ENCODE measurements at regions of chr21 and their contacts with region 1.

Region 1: DNA sequence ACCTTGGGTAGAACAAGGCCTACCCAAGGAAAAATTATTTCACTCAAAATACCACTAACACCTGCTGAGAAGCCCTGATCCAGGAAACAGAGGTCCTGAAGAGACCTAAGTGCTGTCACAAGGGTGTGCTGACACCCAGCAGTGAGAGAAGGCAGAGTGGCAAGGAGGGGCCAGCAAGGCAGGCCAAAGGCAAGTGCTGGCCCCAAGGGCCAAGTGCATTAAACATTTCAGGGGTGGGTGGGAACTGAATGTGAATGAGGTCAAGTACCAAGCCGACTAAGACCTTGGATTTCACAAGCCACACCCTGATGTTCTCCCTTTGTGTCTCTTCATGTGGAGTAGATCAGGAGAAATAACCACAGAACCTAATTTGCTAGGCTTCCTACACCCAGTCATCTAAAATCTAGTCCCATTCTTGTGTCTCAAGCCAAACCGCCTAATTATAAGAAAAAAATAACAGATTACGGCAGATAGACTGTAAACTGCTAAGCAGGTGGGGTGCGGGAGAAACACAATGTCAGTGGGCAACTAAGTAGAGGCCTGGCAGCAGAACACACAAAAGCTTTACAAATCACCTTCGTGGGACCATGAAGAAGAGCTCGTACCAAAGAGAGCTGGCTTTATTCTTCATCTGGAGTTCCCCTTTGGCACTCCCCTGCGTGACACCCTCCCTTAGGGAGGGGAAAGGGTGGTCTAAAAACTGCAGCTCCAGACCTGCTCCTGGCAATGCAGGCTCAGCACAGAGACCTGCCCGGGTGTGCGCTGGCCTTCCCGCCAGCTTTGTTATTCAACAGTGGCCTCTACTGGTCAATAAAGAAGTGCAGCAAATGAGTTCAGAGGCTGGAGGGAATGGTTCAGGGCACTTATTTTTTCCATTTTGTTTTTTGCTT is 8.7 kb downstream of the UBE2G2 start:
- DNase-seq: peak; percentile 51
- H3K4me3 ChIP-seq: no peak overlapping the region
- H3K27ac ChIP-seq: no peak overlapping the region
- H3K4me1 ChIP-seq: peaks cover 6% of the 10 kb centered on the region
- H3K27me3 ChIP-seq: no peaks in the 10 kb centered on the region
- CTCF ChIP-seq: peak; percentile 71 to 82

Region 2: DNA sequence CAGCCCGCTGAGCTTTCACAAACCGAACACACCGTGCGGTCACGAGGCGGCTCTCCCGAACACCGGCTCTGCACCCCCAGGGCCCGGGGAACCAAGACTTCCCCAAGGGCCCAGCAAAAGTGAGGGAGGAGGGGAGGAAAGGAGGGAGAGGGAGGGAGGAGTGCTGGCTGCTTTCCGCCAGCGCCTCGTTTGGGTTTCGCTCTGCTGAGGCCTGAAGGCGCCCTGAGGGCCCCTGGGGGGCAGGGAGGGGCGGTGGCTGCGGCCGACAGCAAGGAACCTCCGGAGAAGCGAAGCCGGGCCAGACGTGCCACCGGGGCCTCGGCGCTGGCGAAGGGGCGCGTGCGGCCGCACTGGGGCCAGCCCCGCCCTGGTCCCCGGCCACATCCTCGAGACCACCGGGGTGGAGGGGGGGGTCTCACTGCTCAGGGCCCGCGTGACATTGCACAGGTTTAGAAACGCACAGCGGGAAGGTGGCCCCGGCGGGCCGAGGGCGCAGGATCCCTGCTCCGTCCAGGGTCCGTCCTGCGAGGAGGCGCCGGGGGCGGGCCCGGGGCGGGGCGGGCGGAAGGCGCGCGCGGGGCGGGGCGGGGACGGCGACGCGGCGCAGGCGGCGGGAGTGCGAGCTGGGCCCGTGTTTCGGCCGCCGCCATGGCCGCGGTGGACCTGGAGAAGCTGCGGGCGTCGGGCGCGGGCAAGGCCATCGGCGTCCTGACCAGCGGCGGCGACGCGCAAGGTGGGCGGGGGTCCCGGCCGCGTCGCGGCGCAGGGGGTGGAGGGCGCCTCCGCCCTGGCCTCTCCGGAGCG is 493.3 kb before region 1 on chr21 and contains the start of gene PFKL:
- CTCF ChIA-PET with region 1: no interaction called
- dilution Hi-C with region 1: no loop called
- in situ Hi-C with region 1: no loop called
- intact Hi-C with region 1: loop called (anchors 5 kb)
- DNase-seq: peak; percentile 66
- H3K4me3 ChIP-seq: peak within 1 kb of the TSS; percentile 54 to 86 (median 67)
- H3K27ac ChIP-seq: peak within 1 kb of the TSS; percentile 65
- H3K4me1 ChIP-seq: peaks cover 23% of the 10 kb centered on the region
- H3K27me3 ChIP-seq: no peaks in the 10 kb centered on the region
- CTCF ChIP-seq: no peak
- total RNA-seq, gene PFKL: 113 to 142 TPM

Region 3: DNA sequence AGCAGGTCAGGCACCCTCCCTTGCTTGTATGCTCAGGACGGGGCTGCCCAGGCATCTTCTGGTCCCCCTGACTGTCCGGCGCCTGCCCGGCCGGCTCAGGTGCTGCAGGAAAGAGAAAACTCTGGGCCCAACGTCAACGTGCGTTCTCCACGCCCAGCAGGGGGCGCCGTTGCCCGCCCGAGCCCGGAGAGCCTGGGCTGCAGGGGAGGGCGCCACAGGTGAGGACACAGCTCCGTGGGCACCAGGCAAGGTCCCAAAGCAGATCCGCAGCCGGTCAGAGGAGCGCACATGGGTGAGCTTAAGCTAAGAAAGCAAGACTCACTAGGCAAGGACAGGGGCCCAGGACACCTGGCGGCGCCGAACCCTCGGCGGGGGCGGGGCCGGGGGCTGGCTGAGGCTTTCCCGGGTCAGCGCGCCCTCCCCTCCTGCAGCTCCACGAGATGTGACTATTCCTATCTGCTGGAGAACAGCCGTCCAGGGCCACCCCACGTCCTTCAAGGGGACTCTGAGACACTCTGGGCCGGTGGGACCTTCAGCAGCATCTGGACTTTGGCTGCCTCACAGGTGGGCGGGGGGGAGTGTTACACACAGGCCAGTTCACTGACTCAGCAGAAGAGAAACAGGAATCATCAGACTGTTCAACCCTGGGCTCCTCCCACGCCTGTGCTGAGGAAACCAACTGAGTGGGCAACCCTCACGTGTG is 282.3 kb before region 1 on chr21:
- CTCF ChIA-PET with region 1: interaction called, 13 read pairs
- dilution Hi-C with region 1: no loop called
- in situ Hi-C with region 1: loop called in 1 of 2 experiments (anchors 5 kb)
- intact Hi-C with region 1: loop called (anchors 1 kb)
- DNase-seq: peak; percentile 56
- H3K4me3 ChIP-seq: peak overlapping the region in 2 of 3 experiments; percentile 37 to 46
- H3K27ac ChIP-seq: no peak overlapping the region
- H3K4me1 ChIP-seq: peaks cover 10% of the 10 kb centered on the region
- H3K27me3 ChIP-seq: peaks cover 2% of the 10 kb centered on the region
- CTCF ChIP-seq: peak; percentile 69 to 92

Region 4: GRCh38 chr21:44686000-44686781 is 106.8 kb before region 1 on chr21:
- CTCF ChIA-PET with region 1: no interaction called
- dilution Hi-C with region 1: no loop called
- in situ Hi-C with region 1: no loop called
- intact Hi-C with region 1: no loop called
- DNase-seq: no peak
- H3K4me3 ChIP-seq: no peak overlapping the region
- H3K27ac ChIP-seq: no peak overlapping the region
- H3K4me1 ChIP-seq: no peaks in the 10 kb centered on the region
- H3K27me3 ChIP-seq: peaks cover 4% of the 10 kb centered on the region
- CTCF ChIP-seq: no peak

Region 5: DNA sequence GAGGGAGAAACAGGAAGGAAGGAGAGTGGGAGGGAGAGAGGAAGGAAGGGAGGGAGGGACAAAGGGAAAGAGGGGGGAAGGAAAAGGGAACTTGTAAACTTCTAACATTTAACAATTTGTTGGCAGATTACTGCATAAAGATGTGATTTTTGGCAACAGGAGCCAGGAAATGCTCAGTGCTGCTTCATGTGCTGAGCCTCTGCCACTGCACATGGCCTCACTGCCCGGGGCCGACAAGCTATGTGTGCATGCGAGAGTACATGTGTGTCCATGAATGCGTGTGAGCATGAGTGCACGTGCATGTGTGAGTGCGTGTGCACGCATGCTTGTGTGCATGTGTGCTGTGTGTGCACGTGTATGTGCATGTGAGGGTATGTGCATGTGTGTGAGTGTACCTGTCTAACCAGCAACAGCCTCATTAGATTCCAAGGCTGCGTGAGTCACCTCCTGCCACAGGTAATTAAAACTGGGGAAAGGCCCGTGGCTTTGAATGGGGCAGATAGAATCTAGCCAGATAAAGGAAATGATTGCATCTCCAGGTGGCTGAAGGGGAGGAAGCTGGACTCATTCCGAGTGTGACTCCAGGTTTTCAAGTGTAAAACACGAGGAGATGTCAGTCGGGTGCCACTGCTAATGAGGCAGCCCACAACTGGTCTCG is 40.2 kb before region 1 on chr21:
- CTCF ChIA-PET with region 1: no interaction called
- dilution Hi-C with region 1: no loop called
- in situ Hi-C with region 1: no loop called
- intact Hi-C with region 1: loop called (anchors 1 kb)
- DNase-seq: peak; percentile 95
- H3K4me3 ChIP-seq: no peak overlapping the region
- H3K27ac ChIP-seq: no peak overlapping the region
- H3K4me1 ChIP-seq: peaks cover 17% of the 10 kb centered on the region
- H3K27me3 ChIP-seq: no peaks in the 10 kb centered on the region
- CTCF ChIP-seq: peak; percentile 32 to 52

Measured in mammary epithelial cell (primary cell).